Activated B cell treated with CpG ODN at 0.5 μM for 24 hours (primary cell): ENCODE measurements at regions of chr22 and their contacts with region 1.

Region 1: GRCh38 chr22:50185384-50186087 is at the start of gene TRABD:
- DNase-seq: peak; percentile 87
- ATAC-seq: peak; percentile 59
- H3K4me3 Mint-ChIP-seq: peak within 1 kb of the TSS; percentile 93
- H3K27ac Mint-ChIP-seq: peak within 1 kb of the TSS; percentile 84
- H3K4me1 Mint-ChIP-seq: peaks cover 42% of the 10 kb centered on the region
- H3K27me3 Mint-ChIP-seq: peaks cover 2% of the 10 kb centered on the region
- CTCF ChIP-seq: no peak
- total RNA-seq, gene TRABD: 80.6 and 86.4 TPM in 2 replicates

Region 2: DNA sequence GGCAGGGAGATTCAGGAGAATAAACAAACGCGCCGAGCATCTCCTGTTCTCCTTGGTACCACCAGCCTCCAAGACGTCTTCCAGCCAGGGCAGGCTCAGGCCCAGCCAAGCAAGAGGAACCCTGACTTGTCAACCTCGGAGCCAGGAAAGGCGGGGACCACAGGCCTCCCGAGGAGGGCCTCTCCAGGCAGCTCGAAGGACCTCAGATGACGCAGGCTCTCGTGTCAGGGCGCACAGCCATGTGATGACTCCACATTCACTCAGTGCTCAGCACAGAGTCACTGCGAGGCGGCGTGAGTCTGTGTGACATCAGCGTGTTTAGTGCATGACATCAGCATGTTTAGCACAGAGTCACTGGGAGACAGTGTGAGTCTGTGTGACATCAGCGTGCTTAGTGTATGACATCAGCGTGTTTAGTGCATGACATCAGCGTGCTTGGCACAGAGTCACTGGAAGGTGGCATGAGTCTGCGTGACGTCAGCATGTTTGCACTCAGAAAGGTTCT is 599.2 kb before region 1 on chr22:
- CTCF ChIA-PET with region 1: no interaction called
- POLR2A ChIA-PET with region 1: no interaction called
- intact Hi-C with region 1: no loop called
- DNase-seq: peak; percentile 6
- ATAC-seq: no peak
- H3K4me3 Mint-ChIP-seq: no peak overlapping the region
- H3K27ac Mint-ChIP-seq: no peak overlapping the region
- H3K4me1 Mint-ChIP-seq: peaks cover 5% of the 10 kb centered on the region
- H3K27me3 Mint-ChIP-seq: no peaks in the 10 kb centered on the region
- CTCF ChIP-seq: no peak

Region 3: DNA sequence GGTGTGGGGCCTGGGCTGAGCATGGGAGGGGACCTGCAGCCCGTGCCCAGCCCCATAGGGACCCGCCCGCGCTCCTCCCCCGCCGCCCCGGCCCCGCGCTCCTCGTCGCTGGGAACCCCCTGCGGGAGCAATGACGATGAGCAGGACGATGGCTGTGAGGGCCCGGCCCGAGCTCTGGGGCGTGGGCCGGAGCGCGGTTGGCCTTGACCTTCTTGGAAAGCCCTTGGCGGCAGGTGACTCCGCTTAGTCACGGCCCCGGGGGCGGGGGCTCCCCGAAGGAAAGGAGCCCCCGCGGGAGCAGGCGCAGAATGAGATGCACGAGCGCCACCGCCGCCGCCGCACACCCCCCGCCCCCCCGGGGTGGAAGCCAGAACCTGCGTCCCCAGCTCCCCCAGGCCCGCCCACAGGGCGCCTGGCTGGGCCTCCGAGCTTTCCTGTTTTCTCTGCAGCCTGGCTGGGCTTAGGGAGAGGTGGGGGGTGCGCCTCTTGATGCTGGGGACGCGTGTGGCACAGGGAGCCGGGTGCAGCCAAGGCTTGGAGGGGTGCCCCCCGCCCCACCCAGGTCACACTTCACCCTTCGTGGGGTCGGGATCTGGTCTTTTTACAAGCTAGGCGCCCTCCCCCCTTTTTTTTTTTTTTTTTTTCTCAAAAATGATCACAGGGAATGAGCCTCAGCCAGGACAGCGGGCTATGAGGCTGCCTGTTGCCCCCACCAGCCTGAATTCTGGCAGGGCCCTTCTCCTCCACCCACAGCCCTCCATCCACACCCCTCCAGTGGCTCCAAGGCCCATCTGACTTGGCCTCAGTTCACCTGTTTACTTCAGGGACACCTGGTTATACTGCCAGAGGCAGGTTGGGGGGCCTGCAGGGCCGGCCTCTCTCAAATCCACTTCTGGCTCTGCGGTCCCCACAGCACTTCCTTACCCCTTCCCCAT is 249.3 kb before region 1 on chr22:
- CTCF ChIA-PET with region 1: no interaction called
- POLR2A ChIA-PET with region 1: interaction called, 62 read pairs
- intact Hi-C with region 1: loop called (anchors 1 kb)
- DNase-seq: peak; percentile 92
- ATAC-seq: peak; percentile 75
- H3K4me3 Mint-ChIP-seq: peak overlapping the region; percentile 61
- H3K27ac Mint-ChIP-seq: peak overlapping the region; percentile 82
- H3K4me1 Mint-ChIP-seq: peaks cover 42% of the 10 kb centered on the region
- H3K27me3 Mint-ChIP-seq: no peaks in the 10 kb centered on the region
- CTCF ChIP-seq: no peak

Region 4: GRCh38 chr22:49983148-49984042 is 202.1 kb before region 1 on chr22:
- CTCF ChIA-PET with region 1: no interaction called
- POLR2A ChIA-PET with region 1: no interaction called
- intact Hi-C with region 1: no loop called
- DNase-seq: peak; percentile 53
- ATAC-seq: peak; percentile 78
- H3K4me3 Mint-ChIP-seq: peak overlapping the region; percentile 65
- H3K27ac Mint-ChIP-seq: no peak overlapping the region
- H3K4me1 Mint-ChIP-seq: peaks cover 13% of the 10 kb centered on the region
- H3K27me3 Mint-ChIP-seq: peaks cover 2% of the 10 kb centered on the region
- CTCF ChIP-seq: no peak

Region 5: GRCh38 chr22:50017701-50018224 is 167.8 kb before region 1 on chr22:
- CTCF ChIA-PET with region 1: no interaction called
- POLR2A ChIA-PET with region 1: no interaction called
- intact Hi-C with region 1: no loop called
- DNase-seq: no peak
- ATAC-seq: no peak
- H3K4me3 Mint-ChIP-seq: no peak overlapping the region
- H3K27ac Mint-ChIP-seq: no peak overlapping the region
- H3K4me1 Mint-ChIP-seq: peaks cover 43% of the 10 kb centered on the region
- H3K27me3 Mint-ChIP-seq: no peaks in the 10 kb centered on the region
- CTCF ChIP-seq: no peak

Region 6: DNA sequence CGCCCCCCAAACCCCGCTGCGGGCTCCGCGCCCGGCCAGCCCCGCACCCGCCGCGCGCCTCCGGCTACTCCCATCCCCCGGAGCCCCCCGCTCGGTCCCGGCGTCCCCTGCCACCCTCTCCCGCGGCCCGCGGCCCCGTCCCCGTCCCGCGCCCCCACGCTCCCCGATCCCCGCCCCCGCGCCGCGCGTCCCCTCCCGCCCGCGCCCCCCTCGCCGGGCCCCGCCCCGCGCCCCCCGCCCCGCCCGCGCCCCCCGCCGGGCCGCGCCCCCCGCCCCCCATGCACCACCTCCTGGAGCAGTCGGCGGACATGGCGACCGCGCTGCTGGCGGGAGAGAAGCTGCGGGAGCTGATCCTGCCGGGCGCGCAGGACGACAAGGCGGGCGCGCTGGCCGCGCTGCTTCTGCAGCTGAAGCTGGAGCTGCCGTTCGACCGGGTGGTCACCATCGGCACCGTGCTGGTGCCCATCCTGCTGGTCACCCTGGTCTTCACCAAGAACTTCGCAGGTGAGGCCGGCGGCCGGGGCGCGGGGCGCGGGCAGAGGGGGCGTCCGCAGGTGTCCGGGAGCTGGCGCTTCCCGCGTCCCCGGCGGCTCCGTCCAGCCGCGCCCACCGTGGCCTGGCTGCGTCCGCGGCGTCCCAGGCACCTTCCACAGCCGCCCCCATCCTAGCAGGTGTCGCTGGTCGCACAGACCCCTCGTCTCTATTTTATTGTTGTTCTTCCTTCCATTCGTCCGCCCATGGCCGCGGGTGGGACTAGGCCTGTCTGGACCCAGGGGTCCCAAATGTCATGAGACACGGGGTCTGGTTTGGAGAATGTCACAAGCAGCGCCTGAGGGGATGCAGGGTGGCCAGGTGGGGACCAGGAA is 14.8 kb before region 1 on chr22 and contains the start of gene PANX2:
- CTCF ChIA-PET with region 1: interaction called, 3 read pairs
- POLR2A ChIA-PET with region 1: interaction called, 80 read pairs
- intact Hi-C with region 1: loop called (anchors 1 kb)
- DNase-seq: no peak
- ATAC-seq: no peak
- H3K4me3 Mint-ChIP-seq: peak within 1 kb of the TSS; percentile 64
- H3K27ac Mint-ChIP-seq: no peak within 1 kb of the TSS
- H3K4me1 Mint-ChIP-seq: peaks cover 27% of the 10 kb centered on the region
- H3K27me3 Mint-ChIP-seq: peaks cover 23% of the 10 kb centered on the region
- CTCF ChIP-seq: no peak
- total RNA-seq, gene PANX2: 0.27 and 0.44 TPM in 2 replicates

Region 7: DNA sequence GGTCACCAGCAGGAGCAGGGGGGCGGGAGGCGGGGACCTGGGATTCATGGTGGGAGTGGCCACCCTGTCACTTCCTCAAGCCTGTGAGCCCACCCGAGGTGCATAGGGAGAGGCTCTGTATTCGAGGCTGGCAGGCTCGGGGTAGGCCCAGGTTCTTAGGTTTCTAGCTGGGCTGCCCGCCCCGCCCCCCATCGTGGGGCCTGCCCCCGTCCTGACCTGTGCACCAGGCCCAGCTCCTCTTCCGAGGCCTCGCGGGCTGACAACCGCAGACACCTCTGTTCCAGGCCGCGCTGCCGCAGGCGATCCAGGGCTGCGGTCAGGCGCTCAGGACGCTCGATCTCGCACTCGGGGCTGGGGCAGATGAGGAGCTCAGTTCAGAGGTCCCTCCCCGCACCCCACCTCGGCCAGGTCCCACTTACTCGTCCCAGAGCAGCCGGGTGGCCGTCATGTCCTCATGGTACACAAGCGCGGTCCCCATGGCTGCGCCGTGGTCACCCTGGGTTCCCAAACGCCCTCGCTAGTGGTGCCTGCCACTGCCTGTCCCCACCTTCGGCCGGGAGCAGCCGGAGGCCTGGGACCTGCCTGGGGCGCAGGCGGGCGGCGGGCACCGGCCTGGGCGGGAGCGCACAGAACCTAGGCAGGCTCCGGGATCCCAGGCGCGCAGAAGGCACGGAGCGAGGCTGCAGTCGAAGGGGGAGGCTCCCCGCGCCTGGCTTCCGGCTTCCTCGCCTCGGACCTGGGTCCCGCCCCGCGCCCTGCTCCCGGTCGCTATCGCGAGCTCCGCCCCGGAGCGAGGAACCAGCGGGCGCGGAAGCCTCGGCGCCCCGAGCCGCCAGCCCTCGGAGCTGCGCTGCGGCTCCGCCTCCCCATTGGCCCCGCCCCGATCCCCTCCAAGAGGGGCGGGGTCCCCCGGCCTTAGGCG is 65.3 kb after region 1 on chr22 and contains the start of gene HDAC10:
- CTCF ChIA-PET with region 1: no interaction called
- POLR2A ChIA-PET with region 1: interaction called, 17 read pairs
- intact Hi-C with region 1: no loop called
- DNase-seq: peak; percentile 76
- ATAC-seq: peak; percentile 82
- H3K4me3 Mint-ChIP-seq: peak within 1 kb of the TSS; percentile 84
- H3K27ac Mint-ChIP-seq: peak within 1 kb of the TSS; percentile 4
- H3K4me1 Mint-ChIP-seq: peaks cover 25% of the 10 kb centered on the region
- H3K27me3 Mint-ChIP-seq: no peaks in the 10 kb centered on the region
- CTCF ChIP-seq: no peak
- total RNA-seq, gene HDAC10: 65.0 and 68.2 TPM in 2 replicates

Region 8: DNA sequence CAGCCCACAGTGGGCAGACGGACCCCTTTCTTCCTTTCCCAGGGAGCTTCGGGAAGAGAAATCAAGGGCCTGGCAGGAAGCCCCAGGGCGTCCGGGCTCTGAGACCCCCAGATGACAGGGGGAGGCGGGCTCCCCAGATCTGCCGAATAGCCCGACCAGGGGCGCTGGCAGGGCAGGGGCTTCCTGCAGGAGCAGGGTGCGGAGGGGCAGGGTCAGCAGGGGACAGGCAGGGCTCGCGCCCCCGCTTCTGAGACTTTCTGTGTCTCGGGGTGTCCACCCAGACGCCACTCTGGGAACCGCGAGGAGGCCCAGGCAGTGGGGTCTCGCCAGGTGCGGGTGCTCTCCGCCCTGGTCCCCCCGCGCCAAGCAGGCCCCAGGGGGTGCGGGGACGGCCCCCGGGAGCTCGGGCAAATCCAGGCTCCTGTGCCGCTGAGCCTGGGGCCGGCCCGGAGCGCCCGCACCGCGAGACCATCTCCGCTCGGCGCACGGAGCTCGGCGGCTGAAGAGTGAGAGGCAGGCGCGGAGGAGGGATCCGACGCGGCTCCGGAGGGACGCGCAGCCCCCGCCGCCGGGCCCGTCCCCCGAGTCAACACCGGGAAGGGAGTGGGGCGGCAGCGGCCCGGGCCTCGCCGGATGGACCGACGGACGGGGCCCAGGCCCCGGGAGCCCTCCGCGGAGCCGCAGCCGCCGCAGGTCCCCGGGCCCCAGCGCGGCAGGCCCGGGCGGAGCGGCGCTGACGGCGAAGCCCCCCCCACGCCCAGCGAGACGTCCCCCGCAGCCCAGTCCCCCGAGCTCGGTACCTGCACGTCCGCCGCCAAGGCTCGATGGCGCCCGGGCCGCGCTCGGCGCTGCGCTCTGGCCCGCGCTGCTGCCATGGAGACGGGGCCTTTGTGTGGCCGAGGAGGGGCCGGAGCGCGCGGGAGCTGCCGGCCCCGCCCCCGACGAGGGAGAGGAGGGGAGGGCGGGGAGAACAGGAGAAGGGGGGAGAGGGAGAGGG is 121.5 kb after region 1 on chr22 and contains the start of gene PLXNB2:
- CTCF ChIA-PET with region 1: no interaction called
- POLR2A ChIA-PET with region 1: no interaction called
- intact Hi-C with region 1: no loop called
- DNase-seq: no peak
- ATAC-seq: peak; percentile 45
- H3K4me3 Mint-ChIP-seq: peak within 1 kb of the TSS; percentile 38
- H3K27ac Mint-ChIP-seq: no peak within 1 kb of the TSS
- H3K4me1 Mint-ChIP-seq: peaks cover 52% of the 10 kb centered on the region
- H3K27me3 Mint-ChIP-seq: no peaks in the 10 kb centered on the region
- CTCF ChIP-seq: no peak
- total RNA-seq, gene PLXNB2: 18.6 and 20.6 TPM in 2 replicates

Region 9: DNA sequence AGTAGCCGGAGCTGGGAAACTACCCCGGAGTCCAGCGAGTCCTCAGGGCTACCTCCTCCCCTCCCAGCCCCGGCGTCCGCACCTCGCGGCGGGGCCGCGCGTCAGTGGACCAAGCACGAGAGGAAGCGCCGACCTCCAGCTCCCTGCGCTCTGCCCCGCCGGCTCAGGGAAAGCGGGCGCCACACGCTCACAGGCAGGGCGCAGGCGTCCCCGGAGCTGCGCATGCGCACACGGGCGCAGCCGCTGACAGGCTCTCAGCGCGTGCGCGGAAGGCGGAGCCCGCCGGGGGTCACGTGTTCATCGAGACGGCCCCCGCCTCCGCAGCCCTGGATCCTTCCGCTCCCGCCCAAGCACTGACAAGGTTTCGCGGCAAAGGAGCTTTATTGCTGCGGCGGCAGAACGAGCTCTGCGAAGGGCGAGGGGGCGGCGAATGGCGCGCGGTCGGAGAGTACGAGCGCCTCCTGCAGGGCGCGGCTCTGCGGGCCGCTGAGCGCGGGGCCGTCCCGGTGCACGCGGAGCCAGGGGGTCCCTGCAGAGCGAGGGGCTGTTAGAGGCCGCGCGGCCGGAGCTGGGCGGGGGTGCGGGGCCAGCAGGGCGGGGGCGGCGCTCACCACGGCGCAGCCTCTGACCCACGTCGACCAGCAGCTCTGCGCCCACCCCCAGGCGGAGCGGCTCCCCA is 340.0 kb after region 1 on chr22 and contains the start of gene SCO2:
- CTCF ChIA-PET with region 1: interaction called, 3 read pairs
- POLR2A ChIA-PET with region 1: interaction called, 18 read pairs
- intact Hi-C with region 1: loop called (anchors 2 kb)
- DNase-seq: peak; percentile 97
- ATAC-seq: peak; percentile 52
- H3K4me3 Mint-ChIP-seq: peak within 1 kb of the TSS; percentile 84
- H3K27ac Mint-ChIP-seq: peak within 1 kb of the TSS; percentile 90
- H3K4me1 Mint-ChIP-seq: peaks cover 33% of the 10 kb centered on the region
- H3K27me3 Mint-ChIP-seq: no peaks in the 10 kb centered on the region
- CTCF ChIP-seq: no peak
- total RNA-seq, gene SCO2: 7.1 and 11.6 TPM in 2 replicates

Region 10: DNA sequence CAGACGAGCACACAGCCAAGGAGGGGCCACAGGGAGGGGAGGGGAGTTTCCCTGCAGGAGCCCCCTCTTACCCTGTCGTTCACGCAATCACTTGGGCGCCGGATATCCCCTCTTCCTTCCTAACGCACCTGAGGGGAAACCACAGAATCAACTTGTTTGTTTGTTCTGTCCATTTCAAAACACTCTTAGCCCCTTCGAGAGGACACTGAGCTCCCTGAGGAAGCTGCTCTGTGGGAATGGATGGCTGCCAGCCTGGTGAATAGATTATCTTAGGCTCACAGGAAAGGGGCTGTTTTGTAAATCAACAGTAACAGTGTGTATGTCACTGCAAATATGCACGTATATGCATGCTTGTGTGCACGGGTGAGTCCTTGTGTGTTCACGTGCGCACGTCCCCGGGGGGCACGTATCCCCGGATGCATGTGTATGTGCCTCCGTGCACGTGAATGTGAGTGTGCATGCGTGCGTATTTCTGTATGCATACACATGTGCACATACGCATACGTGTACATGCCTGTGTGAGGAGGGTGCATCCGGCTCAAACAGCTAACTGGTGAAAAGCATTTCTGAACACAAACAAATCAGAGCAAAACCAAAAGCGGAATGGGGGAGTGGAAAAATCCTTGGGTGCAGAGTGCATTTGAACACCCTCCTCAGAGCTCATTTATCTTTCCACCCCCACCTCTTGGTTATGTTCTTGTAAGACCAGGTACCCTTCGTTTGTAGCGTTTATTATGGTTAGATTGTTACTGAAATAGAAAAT is 435.2 kb after region 1 on chr22:
- CTCF ChIA-PET with region 1: no interaction called
- POLR2A ChIA-PET with region 1: interaction called, 3 read pairs
- intact Hi-C with region 1: loop called (anchors 2 kb)
- DNase-seq: peak; percentile 74
- ATAC-seq: peak; percentile 79
- H3K4me3 Mint-ChIP-seq: peak overlapping the region; percentile 85
- H3K27ac Mint-ChIP-seq: peak overlapping the region; percentile 94
- H3K4me1 Mint-ChIP-seq: peaks cover 32% of the 10 kb centered on the region
- H3K27me3 Mint-ChIP-seq: no peaks in the 10 kb centered on the region
- CTCF ChIP-seq: no peak